ENCODE measurements at regions of chr14 and their contacts with region 1.

Region 1: DNA sequence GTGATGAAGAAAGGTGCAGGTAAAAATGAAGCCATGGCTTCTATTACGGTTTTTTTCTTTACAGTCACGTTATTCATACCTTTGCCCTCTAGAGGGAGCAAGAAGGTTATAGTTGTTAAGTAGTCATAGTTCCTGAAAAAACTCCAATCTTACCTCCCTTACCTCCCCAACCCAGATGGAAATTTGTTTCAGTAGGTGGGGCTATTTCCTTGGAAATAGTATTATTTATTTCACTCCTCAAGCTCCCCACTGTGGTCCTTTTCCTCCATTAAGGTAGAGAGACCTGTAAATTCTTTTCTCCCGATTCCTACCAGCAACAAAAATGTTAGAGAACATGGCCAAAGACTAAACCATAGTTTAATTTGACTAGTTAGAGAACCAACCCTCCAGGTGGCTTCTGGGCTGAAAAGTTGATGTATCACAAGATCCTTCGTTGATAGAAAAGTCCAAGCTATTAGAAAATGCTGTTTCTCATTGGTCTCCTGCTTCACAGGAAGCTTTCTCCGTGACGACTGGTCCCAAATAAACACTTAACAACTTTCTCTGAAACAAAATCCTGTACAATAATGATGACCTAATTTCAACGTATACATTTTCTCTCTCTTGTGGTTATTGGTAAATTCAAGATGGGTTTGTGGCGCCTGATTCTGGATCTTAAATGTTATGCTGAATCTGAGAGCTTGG is 43.5 kb downstream of the TMX1 start:
- DNase-seq: peak; percentile 83
- H3K4me3 ChIP-seq: no peak overlapping the region
- H3K27ac ChIP-seq: no peak overlapping the region
- H3K27me3 ChIP-seq: no peaks in the 10 kb centered on the region
- CTCF ChIP-seq: peak; percentile 79

Region 2: DNA sequence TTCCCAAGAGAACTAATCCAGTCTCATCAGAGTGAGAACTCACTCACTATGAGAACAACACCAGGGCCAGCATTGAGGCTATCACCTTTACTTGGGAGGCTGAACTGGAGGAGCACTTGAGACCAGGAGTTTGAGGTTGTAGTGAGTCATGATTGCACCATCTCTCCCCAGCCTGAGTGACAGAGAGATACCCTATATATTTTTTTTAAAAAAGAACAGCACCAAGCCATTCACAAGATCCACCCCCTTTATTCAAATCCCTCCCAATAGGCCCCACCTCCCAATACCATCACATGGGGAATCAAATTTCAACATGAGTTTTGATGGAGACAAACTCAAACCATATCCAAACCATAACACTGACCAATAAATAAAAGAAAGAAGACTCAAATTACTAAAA is 47.2 kb before region 1 on chr14:
- CTCF ChIA-PET with region 1: no interaction called
- POLR2A ChIA-PET with region 1: no interaction called
- DNase-seq: no peak
- H3K4me3 ChIP-seq: no peak overlapping the region
- H3K27ac ChIP-seq: no peak overlapping the region
- H3K27me3 ChIP-seq: no peaks in the 10 kb centered on the region
- CTCF ChIP-seq: no peak

Region 3: DNA sequence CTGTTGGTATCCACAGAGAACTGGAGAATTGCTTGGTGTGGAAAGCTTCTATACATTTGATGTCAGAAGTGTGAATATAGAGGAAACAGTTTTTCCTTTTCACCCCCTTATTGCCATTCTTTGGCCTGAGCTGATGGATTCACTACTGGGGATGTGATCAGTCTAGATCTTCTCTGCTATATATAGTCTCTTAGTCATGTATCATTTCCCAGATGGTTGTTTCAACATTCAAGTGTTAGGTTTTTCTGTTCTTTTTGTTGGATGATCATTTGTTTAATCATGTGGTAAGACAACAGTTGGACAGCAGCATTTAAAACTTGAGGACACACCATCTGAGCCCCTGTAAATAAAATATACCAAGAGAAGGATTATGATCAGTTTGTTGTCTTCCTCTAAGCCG is 13.9 kb before region 1 on chr14:
- CTCF ChIA-PET with region 1: interaction called, 10 read pairs
- POLR2A ChIA-PET with region 1: no interaction called
- DNase-seq: no peak
- H3K4me3 ChIP-seq: no peak overlapping the region
- H3K27ac ChIP-seq: no peak overlapping the region
- H3K27me3 ChIP-seq: no peaks in the 10 kb centered on the region
- CTCF ChIP-seq: no peak

Region 4: GRCh38 chr14:51554953-51555352 is 271.4 kb after region 1 on chr14:
- CTCF ChIA-PET with region 1: interaction called, 11 read pairs
- POLR2A ChIA-PET with region 1: no interaction called
- DNase-seq: no peak
- H3K4me3 ChIP-seq: no peak overlapping the region
- H3K27ac ChIP-seq: peak overlapping the region; percentile 71
- H3K27me3 ChIP-seq: no peaks in the 10 kb centered on the region
- CTCF ChIP-seq: peak; percentile 32

Region 5: DNA sequence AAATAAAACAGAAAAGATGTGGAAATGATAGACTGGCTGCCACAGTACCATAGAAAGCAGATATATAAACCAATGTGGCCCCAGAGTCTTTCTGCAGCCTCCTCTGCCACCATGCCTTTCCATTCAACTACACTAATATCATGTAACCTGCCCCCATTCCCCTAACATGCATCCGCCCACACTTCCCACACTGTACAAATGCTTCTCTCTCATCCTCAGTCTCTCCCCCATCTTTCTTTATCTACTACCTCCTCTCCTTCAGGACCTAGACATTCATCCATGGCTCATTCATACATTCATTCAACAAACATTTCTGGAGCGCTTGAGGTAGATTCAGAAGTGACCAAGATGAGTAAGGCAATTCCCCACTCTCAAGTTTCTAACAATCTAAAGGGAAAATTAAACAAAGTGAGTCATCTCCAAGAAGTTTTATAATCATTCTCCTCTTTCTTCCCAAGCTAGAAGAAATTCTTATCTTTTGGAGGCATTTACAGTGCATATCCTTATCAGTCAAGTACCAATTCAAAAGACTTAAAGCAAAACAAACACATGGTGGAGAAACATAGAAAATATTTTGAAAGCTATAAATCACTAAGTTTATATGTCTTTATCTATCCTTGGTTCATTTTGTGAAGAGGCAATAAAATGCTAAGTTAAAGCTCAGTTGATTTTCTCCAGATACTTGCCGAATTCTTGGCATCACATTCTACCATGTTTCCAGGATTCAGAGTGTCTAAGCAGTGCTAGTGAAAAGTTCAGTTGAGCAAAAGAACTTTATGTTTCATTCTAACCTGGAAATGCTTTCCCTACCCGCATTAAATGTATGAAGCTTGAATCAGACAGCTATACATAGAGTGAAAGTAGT is 297.7 kb after region 1 on chr14:
- CTCF ChIA-PET with region 1: no interaction called
- POLR2A ChIA-PET with region 1: no interaction called
- DNase-seq: peak; percentile 57
- H3K4me3 ChIP-seq: no peak overlapping the region
- H3K27ac ChIP-seq: no peak overlapping the region
- H3K27me3 ChIP-seq: no peaks in the 10 kb centered on the region
- CTCF ChIP-seq: no peak

Measured in AG04450 (cell line).